Naive thymus-derived CD8-positive, alpha-beta T cell (primary cell): ENCODE measurements at regions of chr3 and their contacts with region 1.

Region 1: GRCh38 chr3:56915966-56916586 is 114.3 kb upstream of the ARHGEF3 start:
- DNase-seq: peak; percentile 40 to 84 (median 65)
- ATAC-seq: peak; percentile 90 to 93
- H3K4me3 Mint-ChIP-seq: peak overlapping the region; percentile 89 to 100 (median 91)
- H3K27ac Mint-ChIP-seq: peak overlapping the region; percentile 93 to 99 (median 94)
- H3K4me1 Mint-ChIP-seq: peaks cover 38 to 78% (median 71%) of the 10 kb centered on the region in 4 donors
- H3K27me3 Mint-ChIP-seq: no peaks in the 10 kb centered on the region

Region 2: GRCh38 chr3:56890448-56891091 is 25.5 kb before region 1 on chr3:
- POLR2A ChIA-PET with region 1: interaction called, 10 read pairs
- DNase-seq: peak in 7 of 10 donors; percentile 13 to 65 (median 51)
- ATAC-seq: peak; percentile 55 to 68
- H3K4me3 Mint-ChIP-seq: peak overlapping the region; percentile 54 to 81 (median 66)
- H3K27ac Mint-ChIP-seq: peak overlapping the region; percentile 2 to 86 (median 56)
- H3K4me1 Mint-ChIP-seq: peaks cover 35 to 89% (median 78%) of the 10 kb centered on the region in 4 donors
- H3K27me3 Mint-ChIP-seq: no peaks in the 10 kb centered on the region

Region 3: DNA sequence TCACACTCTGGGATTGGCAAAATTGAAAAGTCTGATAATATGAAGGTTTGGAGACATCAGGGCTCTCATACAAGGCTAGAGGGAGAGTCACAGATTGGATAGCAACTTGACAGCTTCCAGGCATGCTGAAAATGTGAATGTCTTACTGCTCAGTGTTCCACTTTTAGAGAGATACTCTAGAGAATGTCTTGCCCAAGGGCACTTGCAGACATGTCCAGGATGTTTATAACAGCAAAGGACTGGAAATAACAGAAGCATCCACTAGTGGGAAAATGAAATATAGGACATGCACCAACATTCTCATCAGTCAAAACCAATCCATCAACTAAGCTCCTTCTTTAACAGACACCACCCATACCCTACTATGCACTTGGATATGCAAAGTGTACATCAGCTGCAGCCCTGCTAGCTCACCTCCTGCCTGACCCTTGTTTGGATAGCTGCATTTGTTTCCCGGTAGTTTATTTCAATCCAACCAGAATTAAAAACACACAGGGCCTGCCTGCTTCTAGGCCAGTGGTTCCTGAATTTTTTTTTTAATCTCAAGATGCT is 12.8 kb before region 1 on chr3:
- POLR2A ChIA-PET with region 1: interaction called, 18 read pairs
- DNase-seq: no peak
- ATAC-seq: no peak
- H3K4me3 Mint-ChIP-seq: peak overlapping the region in 2 of 10 donors; percentile 18 to 41
- H3K27ac Mint-ChIP-seq: peak overlapping the region in 9 of 10 donors; percentile 12 to 83 (median 50)
- H3K4me1 Mint-ChIP-seq: peaks cover 45 to 65% (median 63%) of the 10 kb centered on the region in 4 donors
- H3K27me3 Mint-ChIP-seq: no peaks in the 10 kb centered on the region

Region 4: DNA sequence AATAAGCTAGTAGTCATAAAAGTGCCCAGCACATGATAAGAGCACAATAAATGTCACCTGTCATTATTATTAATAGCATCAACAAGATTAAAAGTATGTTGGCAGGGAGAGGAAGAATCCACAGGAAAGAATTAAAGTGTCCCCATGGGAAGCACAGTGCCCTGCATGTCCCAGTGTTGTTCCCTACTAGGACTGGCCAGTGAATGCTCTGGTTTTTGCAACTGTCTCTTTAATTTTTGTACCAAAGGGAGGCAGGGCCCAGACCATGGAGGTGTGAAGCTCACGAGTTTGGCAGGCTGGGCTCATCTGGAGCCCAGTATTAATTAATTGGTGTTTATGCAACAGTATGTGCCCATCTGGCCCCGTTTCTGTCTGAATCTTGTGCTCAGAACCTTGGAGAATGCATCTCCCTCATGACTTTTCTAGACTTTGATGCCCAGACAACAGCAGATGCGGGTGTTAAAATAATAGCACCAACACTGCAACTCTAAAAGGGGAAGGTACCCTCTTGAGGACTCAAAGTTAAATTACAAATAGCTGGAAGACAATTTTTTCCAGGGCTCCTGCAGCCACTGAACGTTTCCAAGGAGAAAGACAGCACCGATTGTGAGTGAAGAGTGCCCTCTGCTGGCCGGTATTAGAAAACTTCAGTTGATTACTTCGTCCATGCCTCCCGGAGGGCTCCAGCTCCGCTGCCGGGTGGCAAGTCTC is 72.5 kb after region 1 on chr3:
- POLR2A ChIA-PET with region 1: interaction called, 10 read pairs
- DNase-seq: peak; percentile 39 to 82 (median 68)
- ATAC-seq: peak; percentile 72 to 87
- H3K4me3 Mint-ChIP-seq: peak overlapping the region in 1 of 10 donors; percentile 52
- H3K27ac Mint-ChIP-seq: peak overlapping the region in 4 of 10 donors; percentile 46 to 75 (median 62)
- H3K4me1 Mint-ChIP-seq: peaks cover 11 to 17% (median 13%) of the 10 kb centered on the region in 4 donors
- H3K27me3 Mint-ChIP-seq: peaks cover 0 to 9% (median 6%) of the 10 kb centered on the region in 5 donors

Region 5: DNA sequence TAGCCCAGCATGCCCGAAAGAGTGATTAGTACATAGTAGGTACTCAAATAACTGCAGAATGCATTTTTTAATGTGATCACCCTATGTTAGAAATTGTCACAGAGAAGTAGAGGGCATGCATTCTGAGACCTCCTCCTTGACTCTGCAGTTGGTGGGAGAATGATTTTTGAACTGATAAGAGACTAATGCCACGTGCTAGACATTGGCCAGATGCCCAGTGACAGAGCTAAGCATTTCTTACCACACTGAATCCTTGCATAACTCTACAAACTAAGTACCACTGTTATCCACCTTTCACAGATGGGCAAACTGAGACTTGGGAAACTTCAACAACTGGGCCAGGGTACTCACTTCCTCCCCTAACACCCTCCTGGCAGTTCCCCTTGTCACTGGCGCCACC is 110.8 kb after region 1 on chr3:
- POLR2A ChIA-PET with region 1: no interaction called
- DNase-seq: no peak
- ATAC-seq: no peak
- H3K4me3 Mint-ChIP-seq: no peak overlapping the region
- H3K27ac Mint-ChIP-seq: no peak overlapping the region
- H3K4me1 Mint-ChIP-seq: no peaks in the 10 kb centered on the region
- H3K27me3 Mint-ChIP-seq: peaks cover 0 to 12% (median 2%) of the 10 kb centered on the region in 5 donors